ENCODE measurements at regions of chr16 and their contacts with region 1.

Region 1: DNA sequence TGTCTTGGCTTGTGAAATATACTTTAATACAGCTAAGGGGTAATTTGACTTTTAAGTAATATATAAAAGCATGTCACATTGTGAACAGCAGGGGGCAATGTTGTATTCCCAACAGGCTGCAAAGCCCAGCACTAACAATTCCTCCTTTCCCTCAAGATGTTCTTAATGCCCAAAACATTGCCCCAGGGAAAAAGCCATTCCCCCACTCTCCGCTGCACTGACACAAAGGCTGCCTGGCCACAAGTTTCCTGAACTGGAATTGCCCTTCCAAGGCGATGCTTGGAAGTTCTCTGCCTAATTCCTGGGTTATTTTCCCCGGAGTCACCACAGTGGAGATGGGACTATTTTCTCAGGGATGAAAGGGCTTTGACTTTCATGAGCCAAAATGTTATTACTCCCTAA is 27.2 kb downstream of the CLEC16A start:
- DNase-seq: peak in 3 of 9 experiments; percentile 38 to 75 (median 68)
- ATAC-seq: peak; percentile 48
- H3K4me3 ChIP-seq: no peak overlapping the region
- H3K4me3 Mint-ChIP-seq: no peak overlapping the region
- H3K27ac ChIP-seq: no peak overlapping the region
- H3K27ac Mint-ChIP-seq: no peak overlapping the region
- H3K4me1 ChIP-seq: peaks cover 10% of the 10 kb centered on the region
- H3K4me1 Mint-ChIP-seq: peaks cover 14% of the 10 kb centered on the region
- H3K27me3 ChIP-seq: no peaks in the 10 kb centered on the region
- H3K27me3 Mint-ChIP-seq: no peaks in the 10 kb centered on the region
- CTCF ChIP-seq: peak; percentile 80

Region 2: GRCh38 chr16:10957771-10958486 is 13.6 kb before region 1 on chr16:
- CTCF ChIA-PET with region 1: interaction called, 48 read pairs
- POLR2A ChIA-PET with region 1: no interaction called
- intact Hi-C with region 1: loop called in 1 of 2 experiments (anchors 1 kb)
- DNase-seq: no peak
- ATAC-seq: peak; percentile 48
- H3K4me3 ChIP-seq: no peak overlapping the region
- H3K4me3 Mint-ChIP-seq: no peak overlapping the region
- H3K27ac ChIP-seq: no peak overlapping the region
- H3K27ac Mint-ChIP-seq: peak overlapping the region; percentile 47
- H3K4me1 ChIP-seq: peaks cover 14% of the 10 kb centered on the region
- H3K4me1 Mint-ChIP-seq: peaks cover 32% of the 10 kb centered on the region
- H3K27me3 ChIP-seq: no peaks in the 10 kb centered on the region
- H3K27me3 Mint-ChIP-seq: no peaks in the 10 kb centered on the region
- CTCF ChIP-seq: no peak

Region 3: GRCh38 chr16:11297492-11298142 is 326.1 kb after region 1 on chr16:
- CTCF ChIA-PET with region 1: interaction called, 13 read pairs
- POLR2A ChIA-PET with region 1: no interaction called
- intact Hi-C with region 1: loop called in 1 of 2 experiments (anchors 2 kb)
- DNase-seq: peak; percentile 49 to 85 (median 76)
- ATAC-seq: peak; percentile 83
- H3K4me3 ChIP-seq: peak overlapping the region; percentile 20 to 53
- H3K4me3 Mint-ChIP-seq: peak overlapping the region; percentile 76
- H3K27ac ChIP-seq: no peak overlapping the region
- H3K27ac Mint-ChIP-seq: peak overlapping the region; percentile 73
- H3K4me1 ChIP-seq: peaks cover 38% of the 10 kb centered on the region
- H3K4me1 Mint-ChIP-seq: peaks cover 35% of the 10 kb centered on the region
- H3K27me3 ChIP-seq: peaks cover 0 to 4% of the 10 kb centered on the region in 2 experiments
- H3K27me3 Mint-ChIP-seq: peaks cover 2% of the 10 kb centered on the region
- CTCF ChIP-seq: no peak